IMR-90 (cell line): ENCODE measurements at regions of chr7 and their contacts with region 1.

Region 1: DNA sequence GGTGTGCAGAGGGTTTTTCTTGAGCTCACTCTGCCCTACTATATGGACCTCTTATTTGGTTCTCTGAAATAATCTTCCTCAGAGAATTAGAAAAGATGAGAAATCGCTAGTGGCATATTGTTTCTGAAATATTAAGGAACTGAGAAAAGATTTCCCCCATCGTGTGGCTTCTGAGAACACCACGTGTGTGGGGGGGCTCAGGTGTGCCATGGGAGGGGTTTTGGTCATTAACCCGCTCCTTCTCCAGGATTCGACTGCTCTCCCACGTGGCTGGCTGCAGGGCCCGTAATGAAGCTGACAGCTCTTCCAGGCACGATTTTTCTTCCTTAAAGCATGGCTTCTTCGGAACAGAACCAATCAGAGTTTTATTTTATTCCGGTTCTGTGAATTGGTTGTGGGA is 67.7 kb downstream of the XRCC2 start:
- DNase-seq: no peak
- ATAC-seq: no peak
- H3K4me3 ChIP-seq: no peak overlapping the region
- H3K27ac ChIP-seq: no peak overlapping the region
- H3K4me1 ChIP-seq: no peaks in the 10 kb centered on the region
- H3K27me3 ChIP-seq: no peaks in the 10 kb centered on the region; the same call in 1 of the 2 replicates
- CTCF ChIP-seq: no peak
- POLR2A ChIP-seq: no peak
- RAD21 ChIP-seq: no peak

Region 2: GRCh38 chr7:152619027-152619739 is 11.0 kb after region 1 on chr7:
- CTCF ChIA-PET with region 1: no interaction called
- POLR2A ChIA-PET with region 1: interaction called, 13 read pairs
- dilution Hi-C with region 1: no loop called
- in situ Hi-C with region 1: no loop called
- intact Hi-C with region 1: no loop called
- DNase-seq: no peak
- ATAC-seq: no peak
- H3K4me3 ChIP-seq: no peak overlapping the region
- H3K27ac ChIP-seq: no peak overlapping the region
- H3K4me1 ChIP-seq: no peaks in the 10 kb centered on the region
- H3K27me3 ChIP-seq: no peaks in the 10 kb centered on the region; the same call in 1 of the 2 replicates
- CTCF ChIP-seq: no peak
- POLR2A ChIP-seq: no peak
- RAD21 ChIP-seq: no peak